Heart left ventricle (tissue), 16 donors: ENCODE measurements at regions of chr7 and their contacts with region 1.

Region 1: GRCh38 chr7:98294796-98295382 is 13.4 kb downstream of the BRI3 start:
- DNase-seq: peak in 1 of 5 donors; percentile 52
- ATAC-seq: peak; percentile 55 to 77 (median 69)
- H3K4me3 ChIP-seq: no peak overlapping the region
- H3K27ac ChIP-seq: peak overlapping the region in 2 of 12 donors; percentile 14 to 25
- H3K4me1 ChIP-seq: peaks cover 0 to 19% (median under 1%) of the 10 kb centered on the region in 12 donors
- H3K27me3 ChIP-seq: no peaks in the 10 kb centered on the region
- CTCF ChIP-seq: peak; percentile 38 to 72 (median 58)
- POLR2A ChIP-seq: peak in 1 of 2 donors; percentile 22

Region 2: DNA sequence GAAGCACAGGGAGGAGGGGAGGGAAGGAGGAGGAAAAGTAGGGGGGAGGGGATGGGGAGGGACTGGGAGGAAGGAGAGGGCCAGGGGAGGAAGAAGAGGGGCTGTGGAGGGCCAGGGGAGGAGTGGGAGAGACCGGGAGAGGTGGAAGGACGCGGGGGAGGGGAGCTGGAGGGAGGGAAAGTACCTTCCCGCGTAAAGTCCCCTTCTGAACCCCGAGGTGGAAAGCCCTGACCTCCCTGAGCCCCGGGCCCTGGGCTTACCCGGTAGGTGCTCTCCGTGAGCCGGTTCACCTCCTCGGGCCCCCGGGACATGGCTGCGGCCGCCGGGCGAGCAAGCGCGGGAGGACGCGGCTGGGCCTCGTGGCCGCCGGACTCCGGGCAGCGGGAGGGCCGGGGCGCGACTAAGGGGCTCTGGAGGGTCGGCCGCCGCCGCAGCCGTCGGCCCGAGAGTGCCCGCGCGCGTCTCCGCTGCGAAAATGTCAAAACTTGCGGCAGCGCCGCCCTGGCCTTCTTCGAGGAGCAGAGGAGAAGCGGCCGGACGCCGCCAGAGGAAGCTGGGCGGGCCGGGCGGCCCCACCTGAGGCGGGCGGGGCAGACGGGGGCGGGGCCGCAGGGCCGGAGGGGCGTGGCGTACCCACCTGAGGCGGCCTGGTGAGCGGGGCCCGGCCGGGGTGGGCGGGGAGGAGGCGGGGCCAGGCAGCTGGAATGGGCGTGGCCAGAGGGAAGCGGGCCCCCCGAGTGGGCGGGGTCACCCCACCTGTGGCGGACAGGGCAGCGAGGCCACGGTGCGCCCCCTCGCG is 105.9 kb after region 1 on chr7 and contains the start of gene BAIAP2L1:
- intact Hi-C with region 1: loop called (anchors 1 to 10 kb)
- DNase-seq: peak; percentile 75 to 91 (median 81)
- ATAC-seq: peak; percentile 76 to 98 (median 94)
- H3K4me3 ChIP-seq: peak within 1 kb of the TSS; percentile 52 to 89 (median 66)
- H3K27ac ChIP-seq: peak within 1 kb of the TSS; percentile 29 to 85 (median 68)
- H3K4me1 ChIP-seq: peaks cover 0 to 12% (median 6%) of the 10 kb centered on the region in 12 donors
- H3K27me3 ChIP-seq: peaks cover 0 to 27% (median 12%) of the 10 kb centered on the region in 9 donors
- CTCF ChIP-seq: peak in 4 of 12 donors; percentile 62 to 80 (median 68)
- POLR2A ChIP-seq: peak in 1 of 2 donors; percentile 28
- total RNA-seq, gene BAIAP2L1: 0.64 to 2.7 (median 1.8) TPM